K562 (cell line): ENCODE measurements at regions of chr10 and their contacts with region 1.

Region 1: GRCh38 chr10:72186258-72186981 is 29.4 kb upstream of the ANAPC16 start:
- DNase-seq: no peak
- ATAC-seq: peak; percentile 34; the same call in 2 of the 3 replicates
- H3K4me3 ChIP-seq: no peak overlapping the region
- H3K27ac ChIP-seq: peak overlapping the region; percentile 0; the same call in 1 of the 3 replicates
- H3K4me1 ChIP-seq: no peaks in the 10 kb centered on the region; a peak in 1 of 5 replicates
- H3K27me3 ChIP-seq: no peaks in the 10 kb centered on the region
- CTCF ChIP-seq: no peak
- EP300 ChIP-seq: no peak
- POLR2A ChIP-seq: no peak
- RAD21 ChIP-seq: no peak

Region 2: DNA sequence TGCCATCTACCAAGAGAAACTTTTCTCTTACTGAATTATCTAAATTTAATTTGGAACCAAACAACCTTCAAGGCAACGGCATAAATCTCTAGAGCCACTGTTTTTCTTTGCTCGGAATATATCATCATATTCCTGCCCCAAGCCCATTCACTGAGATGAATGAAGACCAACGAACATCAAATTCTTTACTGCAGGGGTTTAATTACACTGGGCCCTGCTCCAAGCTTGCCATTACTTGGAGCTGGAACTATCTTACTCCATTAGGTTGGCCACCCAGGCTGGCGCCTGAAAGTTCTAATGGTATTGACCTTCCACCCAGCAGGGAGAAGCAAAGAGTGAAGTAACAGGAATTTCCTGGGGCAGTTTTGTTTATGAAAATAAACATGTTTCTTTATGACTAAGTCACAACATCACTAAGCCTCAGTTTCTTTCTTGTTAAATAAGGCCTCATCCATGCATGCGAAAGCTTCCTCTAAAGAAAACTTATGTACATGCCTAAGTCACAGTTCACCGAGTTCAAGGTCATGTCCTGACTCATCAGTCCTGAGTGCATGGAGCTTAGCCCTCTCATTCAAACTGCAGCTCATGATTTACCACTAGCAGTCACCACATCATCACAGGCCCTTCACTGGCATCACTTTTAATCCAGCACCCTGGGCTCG is 12.7 kb before region 1 on chr10:
- CTCF ChIA-PET with region 1: no interaction called
- POLR2A ChIA-PET with region 1: interaction called, 15 read pairs
- in situ Hi-C with region 1: no loop called
- intact Hi-C with region 1: no loop called
- DNase-seq: peak in 1 of 4 experiments; percentile 24
- ATAC-seq: peak; percentile 23; the same call in 1 of the 3 replicates
- H3K4me3 ChIP-seq: no peak overlapping the region
- H3K27ac ChIP-seq: no peak overlapping the region
- H3K4me1 ChIP-seq: peaks cover 3 to 17% of the 10 kb centered on the region in 2 experiments; a peak in 3 of 5 replicates
- H3K27me3 ChIP-seq: no peaks in the 10 kb centered on the region
- CTCF ChIP-seq: no peak
- EP300 ChIP-seq: no peak
- POLR2A ChIP-seq: no peak
- RAD21 ChIP-seq: no peak

Region 3: DNA sequence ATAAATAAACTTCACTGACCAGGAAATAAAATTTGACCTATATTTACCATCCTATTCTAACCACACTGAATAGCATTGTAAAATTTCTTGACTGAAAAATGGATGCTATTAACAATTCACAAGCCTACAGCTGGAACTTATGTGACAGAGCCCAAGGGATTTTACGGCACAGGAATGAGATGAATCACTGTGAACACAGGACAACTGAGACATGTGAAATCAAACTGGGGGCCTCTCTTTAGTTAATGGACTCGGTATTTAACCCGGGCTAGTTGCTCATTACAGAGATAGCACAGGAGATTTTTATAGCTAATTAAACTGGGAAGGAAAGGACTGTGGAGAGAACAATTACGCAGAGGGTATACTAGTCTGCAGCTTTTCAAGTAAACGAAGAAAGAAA is 338.9 kb after region 1 on chr10:
- CTCF ChIA-PET with region 1: no interaction called
- POLR2A ChIA-PET with region 1: no interaction called
- in situ Hi-C with region 1: no loop called
- intact Hi-C with region 1: no loop called
- DNase-seq: no peak
- ATAC-seq: no peak
- H3K4me3 ChIP-seq: no peak overlapping the region
- H3K27ac ChIP-seq: no peak overlapping the region
- H3K4me1 ChIP-seq: no peaks in the 10 kb centered on the region
- H3K27me3 ChIP-seq: no peaks in the 10 kb centered on the region
- CTCF ChIP-seq: no peak
- EP300 ChIP-seq: no peak
- POLR2A ChIP-seq: no peak
- RAD21 ChIP-seq: no peak